Esophagus squamous epithelium (tissue), 5 donors: ENCODE measurements at regions of chrX and their contacts with region 1.

Region 1: GRCh38 chrX:119817130-119817690 is 25.8 kb upstream of the RPL39 start:
- DNase-seq: no peak
- H3K4me3 ChIP-seq: no peak overlapping the region
- H3K27ac ChIP-seq: peak overlapping the region in 1 of 4 donors; percentile 25
- H3K4me1 ChIP-seq: no peaks in the 10 kb centered on the region
- H3K27me3 ChIP-seq: no peaks in the 10 kb centered on the region
- CTCF ChIP-seq: no peak
- POLR2A ChIP-seq: no peak

Region 2: DNA sequence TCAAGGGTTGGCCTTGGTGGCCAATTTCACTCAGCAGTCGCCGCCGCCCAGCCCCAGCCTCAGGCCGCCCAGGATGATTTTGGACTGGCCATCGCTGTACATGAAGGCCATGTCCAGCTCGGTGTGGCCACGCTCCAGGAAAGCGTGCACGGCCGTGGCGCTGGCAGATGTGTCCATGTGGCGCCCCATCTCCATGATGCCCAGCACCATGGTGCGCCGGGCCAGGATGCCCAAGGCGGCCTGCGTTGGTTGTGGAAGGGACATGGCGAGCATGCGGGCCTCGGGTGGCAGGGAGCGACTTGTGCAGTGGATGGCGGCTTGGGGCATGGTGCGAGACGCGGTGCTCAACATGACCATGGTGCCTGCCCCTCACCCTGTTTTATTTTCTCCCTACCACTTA is 938.2 kb before region 1 on chrX:
- intact Hi-C with region 1: no loop called
- DNase-seq: no peak
- H3K4me3 ChIP-seq: no peak overlapping the region
- H3K27ac ChIP-seq: no peak overlapping the region
- H3K4me1 ChIP-seq: no peaks in the 10 kb centered on the region
- H3K27me3 ChIP-seq: no peaks in the 10 kb centered on the region
- CTCF ChIP-seq: no peak
- POLR2A ChIP-seq: no peak

Region 3: GRCh38 chrX:119871599-119872395 is 54.6 kb after region 1 on chrX and contains the starts of genes NDUFA1 and RNF113A:
- intact Hi-C with region 1: loop called (anchors 10 kb)
- DNase-seq: peak; percentile 44
- H3K4me3 ChIP-seq: peak within 1 kb of the TSS; percentile 51 to 73 (median 61)
- H3K27ac ChIP-seq: peak within 1 kb of the TSS; percentile 87 to 95 (median 92)
- H3K4me1 ChIP-seq: peaks cover 0 to 40% (median 5%) of the 10 kb centered on the region in 3 donors
- H3K27me3 ChIP-seq: no peaks in the 10 kb centered on the region
- CTCF ChIP-seq: no peak
- POLR2A ChIP-seq: peak in 2 of 4 donors; percentile 66 to 80
- total RNA-seq, gene NDUFA1: 54.0 to 94.7 (median 66.5) TPM
- total RNA-seq, gene RNF113A: 8.1 to 23.4 (median 12.2) TPM